ENCODE measurements at regions of chr12 and their contacts with region 1.

Region 1: GRCh38 chr12:109804820-109805761 is 28.1 kb downstream of the TRPV4 start:
- DNase-seq: peak; percentile 21 to 91
- H3K4me3 ChIP-seq: no peak overlapping the region
- H3K27ac ChIP-seq: no peak overlapping the region
- H3K4me1 ChIP-seq: no peaks in the 10 kb centered on the region
- H3K27me3 ChIP-seq: no peaks in the 10 kb centered on the region
- CTCF ChIP-seq: peak; percentile 89 to 98 (median 97)
- EP300 ChIP-seq: no peak
- POLR2A ChIP-seq: no peak
- RAD21 ChIP-seq: peak; percentile 89 to 92

Region 2: GRCh38 chr12:109818905-109819500 is 13.9 kb after region 1 on chr12:
- CTCF ChIA-PET with region 1: interaction called, 28 read pairs
- POLR2A ChIA-PET with region 1: no interaction called
- DNase-seq: no peak
- H3K4me3 ChIP-seq: no peak overlapping the region
- H3K27ac ChIP-seq: no peak overlapping the region
- H3K4me1 ChIP-seq: peaks cover 0 to 7% (median 4%) of the 10 kb centered on the region in 4 experiments; a peak in 5 of 7 replicates
- H3K27me3 ChIP-seq: no peaks in the 10 kb centered on the region
- CTCF ChIP-seq: no peak
- EP300 ChIP-seq: no peak
- POLR2A ChIP-seq: no peak
- RAD21 ChIP-seq: no peak

Region 3: GRCh38 chr12:109827526-109828235 is 22.6 kb after region 1 on chr12:
- CTCF ChIA-PET with region 1: interaction called, 17 read pairs
- POLR2A ChIA-PET with region 1: no interaction called
- DNase-seq: no peak
- H3K4me3 ChIP-seq: no peak overlapping the region
- H3K27ac ChIP-seq: no peak overlapping the region
- H3K4me1 ChIP-seq: peaks cover 0 to 8% (median 1%) of the 10 kb centered on the region in 4 experiments; a peak in 6 of 7 replicates
- H3K27me3 ChIP-seq: no peaks in the 10 kb centered on the region
- CTCF ChIP-seq: no peak
- EP300 ChIP-seq: no peak
- POLR2A ChIP-seq: no peak
- RAD21 ChIP-seq: no peak

Region 4: GRCh38 chr12:109833307-109834189 is 28.5 kb after region 1 on chr12 and contains the start of gene TRPV4:
- CTCF ChIA-PET with region 1: interaction called, 17 read pairs
- POLR2A ChIA-PET with region 1: no interaction called
- DNase-seq: peak in 1 of 2 experiments; percentile 77
- H3K4me3 ChIP-seq: peak within 1 kb of the TSS; percentile 38 to 61 (median 43)
- H3K27ac ChIP-seq: no peak within 1 kb of the TSS
- H3K4me1 ChIP-seq: peaks cover 0 to 6% (median 1%) of the 10 kb centered on the region in 4 experiments; a peak in 3 of 7 replicates
- H3K27me3 ChIP-seq: no peaks in the 10 kb centered on the region; a peak in 1 of 7 replicates
- CTCF ChIP-seq: no peak
- EP300 ChIP-seq: no peak
- POLR2A ChIP-seq: no peak
- RAD21 ChIP-seq: no peak
- total RNA-seq, gene TRPV4: 2.1 and 2.5 TPM in 2 replicates

Region 5: GRCh38 chr12:109844983-109845823 is 40.1 kb after region 1 on chr12:
- CTCF ChIA-PET with region 1: interaction called, 183 read pairs
- POLR2A ChIA-PET with region 1: no interaction called
- DNase-seq: peak; percentile 69 to 99
- H3K4me3 ChIP-seq: peak overlapping the region in 1 of 4 experiments; percentile 43; a peak in 2 of 8 replicates
- H3K27ac ChIP-seq: no peak overlapping the region
- H3K4me1 ChIP-seq: peaks cover 0 to 4% (median 2%) of the 10 kb centered on the region in 4 experiments; a peak in 5 of 7 replicates
- H3K27me3 ChIP-seq: no peaks in the 10 kb centered on the region
- CTCF ChIP-seq: peak; percentile 95 to 96 (median 95)
- EP300 ChIP-seq: no peak; a peak in 1 of 3 replicates
- POLR2A ChIP-seq: no peak
- RAD21 ChIP-seq: peak; percentile 74 to 83

Region 6: GRCh38 chr12:109880016-109880931 is 75.2 kb after region 1 on chr12 and contains the start of gene GLTP:
- CTCF ChIA-PET with region 1: interaction called, 14 read pairs
- POLR2A ChIA-PET with region 1: interaction called, 4 read pairs
- DNase-seq: peak; percentile 44 to 91
- H3K4me3 ChIP-seq: peak within 1 kb of the TSS; percentile 72 to 93 (median 82)
- H3K27ac ChIP-seq: peak within 1 kb of the TSS; percentile 43; the same call in 1 of the 2 replicates
- H3K4me1 ChIP-seq: peaks cover 11 to 29% (median 14%) of the 10 kb centered on the region in 4 experiments
- H3K27me3 ChIP-seq: no peaks in the 10 kb centered on the region; a peak in 1 of 7 replicates
- CTCF ChIP-seq: peak; percentile 66 to 91 (median 71)
- EP300 ChIP-seq: no peak
- POLR2A ChIP-seq: peak in 1 of 2 experiments; percentile 62; a peak in 1 of 3 replicates
- RAD21 ChIP-seq: peak; percentile 55 to 80
- total RNA-seq, gene GLTP: 24.4 and 26.1 TPM in 2 replicates

Region 7: DNA sequence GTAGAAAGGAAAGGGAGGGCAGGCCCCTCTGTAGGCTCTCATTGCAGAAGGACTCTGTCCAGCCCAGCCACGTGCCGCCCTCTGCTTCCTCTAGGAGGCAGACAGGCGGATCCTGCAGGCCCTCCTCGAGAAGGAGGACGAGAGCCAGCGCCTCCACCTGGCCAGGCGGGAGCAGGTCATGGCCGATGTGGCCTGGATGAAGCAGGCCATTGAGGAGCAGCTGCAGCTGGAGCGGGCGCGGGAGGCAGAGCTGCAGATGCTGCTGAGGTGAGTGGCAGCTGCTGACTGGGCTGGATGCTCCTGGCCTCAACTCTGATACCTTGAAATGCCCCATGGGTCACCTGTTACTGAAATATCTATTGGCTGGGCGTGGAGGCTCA is 105.9 kb after region 1 on chr12:
- CTCF ChIA-PET with region 1: interaction called, 11 read pairs
- POLR2A ChIA-PET with region 1: no interaction called
- DNase-seq: peak; percentile 60 to 87
- H3K4me3 ChIP-seq: no peak overlapping the region
- H3K27ac ChIP-seq: no peak overlapping the region
- H3K4me1 ChIP-seq: no peaks in the 10 kb centered on the region; a peak in 1 of 7 replicates
- H3K27me3 ChIP-seq: peaks cover 0 to 17% (median 7%) of the 10 kb centered on the region in 4 experiments; a peak in 3 of 7 replicates
- CTCF ChIP-seq: peak; percentile 99 to 100 (median 99)
- EP300 ChIP-seq: no peak
- POLR2A ChIP-seq: no peak
- RAD21 ChIP-seq: peak; percentile 72 to 83

Measured in H1 (cell line).